HepG2 (cell line): ENCODE measurements at regions of chr18 and their contacts with region 1.

Region 1: GRCh38 chr18:13011719-13012118 is 20.6 kb downstream of the CEP192 start:
- DNase-seq: no peak
- ATAC-seq: no peak
- H3K4me3 ChIP-seq: no peak overlapping the region
- H3K27ac ChIP-seq: no peak overlapping the region
- H3K4me1 ChIP-seq: no peaks in the 10 kb centered on the region
- H3K27me3 ChIP-seq: no peaks in the 10 kb centered on the region; a peak in 1 of 5 replicates
- CTCF ChIP-seq: no peak
- EP300 ChIP-seq: no peak
- POLR2A ChIP-seq: no peak
- RAD21 ChIP-seq: no peak

Region 2: DNA sequence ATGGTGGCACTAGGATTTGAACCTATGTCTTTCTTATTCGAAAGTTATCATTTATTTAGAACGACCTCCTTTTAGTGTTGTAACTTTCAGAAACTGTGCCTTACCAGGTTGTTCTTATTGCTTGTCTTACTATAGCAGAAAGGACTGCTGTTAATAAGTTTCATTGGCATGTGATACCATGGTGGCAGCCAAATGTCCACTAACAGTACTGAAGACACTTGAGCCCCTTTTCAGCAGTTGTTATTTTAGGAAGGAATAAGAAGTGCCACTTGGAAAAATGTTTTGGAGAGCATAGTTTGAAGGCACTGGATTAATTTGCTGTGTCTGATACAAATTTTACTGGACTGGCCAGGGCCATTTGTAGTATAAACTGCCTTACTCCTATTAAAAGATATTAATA is 17.1 kb after region 1 on chr18:
- CTCF ChIA-PET with region 1: no interaction called
- POLR2A ChIA-PET with region 1: no interaction called
- in situ Hi-C with region 1: no loop called
- intact Hi-C with region 1: loop called (anchors 2 kb)
- DNase-seq: no peak
- ATAC-seq: no peak
- H3K4me3 ChIP-seq: no peak overlapping the region
- H3K27ac ChIP-seq: no peak overlapping the region
- H3K4me1 ChIP-seq: no peaks in the 10 kb centered on the region
- H3K27me3 ChIP-seq: no peaks in the 10 kb centered on the region
- CTCF ChIP-seq: no peak
- EP300 ChIP-seq: no peak
- POLR2A ChIP-seq: no peak
- RAD21 ChIP-seq: no peak

Region 3: DNA sequence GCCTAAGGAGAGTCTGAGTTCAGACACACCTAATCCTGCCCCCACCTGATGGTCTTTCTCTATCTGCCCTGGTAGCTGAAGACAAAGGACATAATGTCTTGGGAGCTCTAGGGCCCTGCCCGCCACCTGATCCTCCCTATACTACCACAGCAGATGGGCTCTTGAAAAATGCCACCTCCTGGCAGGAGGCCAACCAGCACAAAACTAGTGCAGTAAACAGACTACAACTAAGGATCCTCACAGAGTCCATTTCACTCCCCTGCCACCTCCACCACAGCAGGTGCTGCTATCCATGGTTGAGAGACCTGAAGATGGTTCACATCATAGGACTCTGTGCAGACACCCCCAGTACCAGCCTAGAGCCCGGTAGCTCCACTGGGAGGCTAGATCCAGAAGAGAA is 154.3 kb after region 1 on chr18:
- CTCF ChIA-PET with region 1: no interaction called
- POLR2A ChIA-PET with region 1: no interaction called
- in situ Hi-C with region 1: no loop called
- intact Hi-C with region 1: no loop called
- DNase-seq: no peak
- ATAC-seq: no peak; the same call in 2 of the 3 replicates
- H3K4me3 ChIP-seq: no peak overlapping the region; a peak in 1 of 6 replicates
- H3K27ac ChIP-seq: no peak overlapping the region
- H3K4me1 ChIP-seq: peaks cover 35% of the 10 kb centered on the region
- H3K27me3 ChIP-seq: no peaks in the 10 kb centered on the region; a peak in 1 of 5 replicates
- CTCF ChIP-seq: no peak
- EP300 ChIP-seq: no peak
- POLR2A ChIP-seq: no peak
- RAD21 ChIP-seq: no peak